Esophagus muscularis mucosa (tissue), 4 donors: ENCODE measurements at regions of chr9 and their contacts with region 1.

Region 1: GRCh38 chr9:33415501-33416038 is 13.2 kb upstream of the AQP7 start:
- DNase-seq: no peak
- H3K4me3 ChIP-seq: no peak overlapping the region
- H3K27ac ChIP-seq: no peak overlapping the region
- H3K4me1 ChIP-seq: peaks cover 3 to 21% (median 13%) of the 10 kb centered on the region in 4 donors
- H3K27me3 ChIP-seq: peaks cover 0 to 18% (median 0%) of the 10 kb centered on the region in 4 donors
- CTCF ChIP-seq: peak; percentile 76 to 84 (median 77)
- EP300 ChIP-seq: no peak
- POLR2A ChIP-seq: no peak

Region 2: GRCh38 chr9:33320568-33321261 is 94.9 kb before region 1 on chr9:
- intact Hi-C with region 1: no loop called
- DNase-seq: no peak
- H3K4me3 ChIP-seq: no peak overlapping the region
- H3K27ac ChIP-seq: peak overlapping the region; percentile 66 to 78 (median 76)
- H3K4me1 ChIP-seq: peaks cover 16 to 22% (median 20%) of the 10 kb centered on the region in 4 donors
- H3K27me3 ChIP-seq: no peaks in the 10 kb centered on the region
- CTCF ChIP-seq: no peak
- EP300 ChIP-seq: no peak
- POLR2A ChIP-seq: no peak

Region 3: GRCh38 chr9:33374634-33375213 is 40.8 kb before region 1 on chr9:
- intact Hi-C with region 1: loop called (anchors 1 kb)
- DNase-seq: peak; percentile 95
- H3K4me3 ChIP-seq: peak overlapping the region; percentile 20 to 28 (median 25)
- H3K27ac ChIP-seq: peak overlapping the region; percentile 37 to 57 (median 48)
- H3K4me1 ChIP-seq: peaks cover 13 to 21% (median 15%) of the 10 kb centered on the region in 4 donors
- H3K27me3 ChIP-seq: no peaks in the 10 kb centered on the region
- CTCF ChIP-seq: peak; percentile 85 to 94 (median 89)
- EP300 ChIP-seq: no peak
- POLR2A ChIP-seq: no peak